OCI-LY7 (cell line): ENCODE measurements at regions of chrX and their contacts with region 1.

Region 1: DNA sequence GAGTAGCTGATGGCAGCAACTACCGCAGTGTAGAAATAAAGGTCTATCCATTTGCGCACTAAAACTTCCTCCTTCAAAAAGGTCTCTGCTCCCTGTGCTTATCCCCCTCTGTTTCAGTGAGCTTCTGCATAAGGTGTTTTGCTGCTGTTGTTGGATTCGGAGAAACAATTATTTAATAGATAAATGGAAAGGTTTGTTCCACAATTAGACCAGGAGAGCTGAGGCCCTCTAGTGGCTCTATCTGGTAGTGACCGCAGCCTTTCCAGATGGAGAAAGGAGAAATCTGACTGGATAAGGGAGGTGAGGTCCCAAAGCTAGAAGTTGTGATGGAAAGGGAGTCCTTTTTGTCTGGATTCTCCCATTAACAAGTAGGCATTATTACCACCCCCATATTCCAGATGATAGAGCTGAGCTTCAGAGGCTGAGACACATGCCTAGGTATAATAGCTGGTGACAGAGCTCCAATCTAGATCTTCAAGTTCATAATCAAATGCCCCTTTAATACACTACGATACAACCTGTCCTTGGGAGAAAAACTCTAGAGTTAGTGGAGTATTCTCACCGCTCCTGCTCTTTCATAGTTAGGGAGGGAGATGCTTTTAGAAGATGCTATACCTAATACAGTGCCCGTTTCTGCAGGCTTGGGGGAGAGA is 5.1 kb upstream of the GABRQ start:
- DNase-seq: peak; percentile 12
- H3K4me3 ChIP-seq: no peak overlapping the region
- H3K27ac ChIP-seq: no peak overlapping the region
- H3K4me1 ChIP-seq: no peaks in the 10 kb centered on the region
- CTCF ChIP-seq: peak; percentile 82

Region 2: DNA sequence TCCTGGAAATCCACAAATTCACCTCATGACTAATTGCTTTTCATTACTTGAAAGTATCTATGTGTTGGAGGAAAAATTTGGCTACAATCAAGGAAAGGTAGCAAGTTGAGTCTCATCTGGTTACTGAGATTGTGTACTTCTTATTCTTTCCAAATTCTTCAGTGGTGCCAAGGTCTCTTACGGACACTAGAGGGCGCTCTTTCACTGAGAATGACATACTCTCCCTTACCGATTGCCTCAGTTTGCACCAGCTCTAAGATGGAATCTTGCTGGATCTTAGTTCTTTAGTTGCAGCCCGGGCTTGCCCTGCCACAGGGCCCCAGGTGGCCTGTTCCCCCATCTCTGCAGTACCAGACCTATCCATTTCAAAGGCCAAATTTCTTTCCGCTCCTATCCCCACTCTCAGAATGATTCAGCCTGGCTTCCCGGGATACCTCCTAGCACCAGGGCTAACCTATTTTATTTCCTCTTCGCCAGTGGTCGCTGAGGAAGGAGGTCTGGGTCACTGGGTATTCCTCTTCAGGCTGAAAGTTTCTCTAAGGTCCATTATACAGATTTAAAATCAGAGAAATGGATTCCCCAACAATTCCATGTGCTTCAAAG is 1480.8 kb before region 1 on chrX:
- CTCF ChIA-PET with region 1: no interaction called
- POLR2A ChIA-PET with region 1: no interaction called
- intact Hi-C with region 1: loop called (anchors 10 kb)
- DNase-seq: peak; percentile 52
- H3K4me3 ChIP-seq: no peak overlapping the region
- H3K27ac ChIP-seq: no peak overlapping the region
- H3K4me1 ChIP-seq: no peaks in the 10 kb centered on the region
- CTCF ChIP-seq: peak; percentile 81

Region 3: DNA sequence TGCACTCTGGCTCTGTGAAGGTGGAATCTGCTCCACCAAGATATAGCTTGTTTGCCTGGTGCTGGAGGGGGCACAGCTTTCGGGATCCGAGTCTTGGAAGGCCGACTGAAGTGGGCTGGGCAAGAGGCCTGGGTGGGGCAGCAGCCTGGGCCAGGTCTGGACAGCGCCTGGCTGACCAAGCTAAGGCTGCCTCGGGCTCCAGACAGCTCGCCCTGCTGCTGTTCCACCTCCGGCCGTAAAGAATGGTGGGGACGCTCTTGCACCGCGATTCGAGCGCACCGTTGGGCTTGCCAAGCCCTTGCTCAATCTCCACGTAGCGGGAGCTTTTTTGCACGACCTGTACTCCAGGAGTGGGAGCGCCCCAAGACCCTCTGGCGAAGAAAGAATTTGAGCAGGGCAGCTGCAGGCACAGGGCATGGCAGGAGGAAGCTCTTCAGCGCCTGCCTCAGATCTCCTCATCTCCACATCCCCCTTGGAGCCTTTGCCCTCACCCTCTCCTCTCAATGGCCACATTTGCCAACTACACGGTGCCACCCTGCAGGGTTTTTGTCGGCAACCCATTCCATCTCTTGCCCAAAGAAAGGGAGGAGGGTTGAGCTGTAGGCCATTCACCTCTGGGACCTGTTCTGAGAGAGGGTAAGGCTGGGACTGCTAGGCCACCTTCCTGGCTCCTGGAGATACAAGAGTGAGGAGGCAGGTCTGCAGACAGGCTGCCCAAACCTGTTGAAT is 879.1 kb before region 1 on chrX:
- CTCF ChIA-PET with region 1: no interaction called
- POLR2A ChIA-PET with region 1: no interaction called
- intact Hi-C with region 1: loop called (anchors 5 kb)
- DNase-seq: no peak
- H3K4me3 ChIP-seq: no peak overlapping the region
- H3K27ac ChIP-seq: no peak overlapping the region
- H3K4me1 ChIP-seq: no peaks in the 10 kb centered on the region
- CTCF ChIP-seq: no peak; the same call in 1 of the 2 replicates

Region 4: DNA sequence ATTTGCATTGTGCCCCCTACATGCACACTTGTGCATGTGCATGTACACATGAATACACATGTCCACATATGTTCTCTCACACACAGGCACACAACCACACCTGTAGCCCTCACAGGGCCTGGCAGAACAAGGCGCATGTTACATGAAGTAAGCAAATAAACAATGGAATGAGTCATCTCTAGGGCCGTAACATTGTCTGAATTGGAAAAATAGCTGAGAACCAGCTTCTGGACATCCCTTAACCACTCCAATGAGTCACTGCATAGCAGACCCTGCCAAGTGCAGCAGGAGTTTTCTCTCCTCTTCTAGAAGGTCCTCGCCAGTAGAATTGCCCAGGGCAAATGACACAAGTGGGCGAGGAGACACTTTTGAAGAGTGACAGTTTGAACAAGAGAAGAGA is 560.3 kb before region 1 on chrX:
- CTCF ChIA-PET with region 1: no interaction called
- POLR2A ChIA-PET with region 1: no interaction called
- intact Hi-C with region 1: no loop called
- DNase-seq: no peak
- H3K4me3 ChIP-seq: no peak overlapping the region
- H3K27ac ChIP-seq: no peak overlapping the region
- H3K4me1 ChIP-seq: no peaks in the 10 kb centered on the region
- CTCF ChIP-seq: no peak